ENCODE measurements at regions of chr20 and their contacts with region 1.

Region 1: DNA sequence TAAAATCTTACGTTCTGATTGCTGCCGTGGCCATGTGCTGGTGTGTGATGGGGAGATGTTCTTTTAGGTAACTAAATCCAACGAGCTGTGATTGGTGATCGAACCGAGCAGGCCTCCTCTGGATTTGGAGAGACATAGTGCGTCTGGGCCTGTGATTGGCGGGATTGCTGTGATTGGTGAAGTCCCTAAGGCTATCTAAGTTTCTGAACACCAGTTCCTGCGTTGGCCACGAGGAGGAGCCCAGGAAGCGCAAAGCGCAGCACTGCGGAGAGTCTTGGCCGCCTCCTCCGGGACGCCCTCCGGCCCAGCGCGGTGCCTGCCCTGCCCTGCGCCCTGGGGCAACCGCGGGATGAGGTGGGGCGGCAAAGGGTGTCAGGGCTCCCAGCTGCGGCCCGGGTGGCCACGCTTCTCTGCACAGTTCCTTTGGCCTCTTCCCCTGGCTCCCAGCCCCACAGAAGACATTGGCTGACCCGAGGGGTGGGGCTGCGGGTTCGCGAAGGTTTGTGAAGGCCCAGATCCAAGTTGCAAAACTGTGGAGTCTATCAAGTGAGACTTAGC is 33.0 kb downstream of the HNF4A start:
- DNase-seq: peak; percentile 89
- H3K4me3 ChIP-seq: no peak overlapping the region
- H3K27ac ChIP-seq: no peak overlapping the region
- H3K4me1 ChIP-seq: no peaks in the 10 kb centered on the region
- H3K27me3 ChIP-seq: no peaks in the 10 kb centered on the region
- CTCF ChIP-seq: peak; percentile 84

Region 2: DNA sequence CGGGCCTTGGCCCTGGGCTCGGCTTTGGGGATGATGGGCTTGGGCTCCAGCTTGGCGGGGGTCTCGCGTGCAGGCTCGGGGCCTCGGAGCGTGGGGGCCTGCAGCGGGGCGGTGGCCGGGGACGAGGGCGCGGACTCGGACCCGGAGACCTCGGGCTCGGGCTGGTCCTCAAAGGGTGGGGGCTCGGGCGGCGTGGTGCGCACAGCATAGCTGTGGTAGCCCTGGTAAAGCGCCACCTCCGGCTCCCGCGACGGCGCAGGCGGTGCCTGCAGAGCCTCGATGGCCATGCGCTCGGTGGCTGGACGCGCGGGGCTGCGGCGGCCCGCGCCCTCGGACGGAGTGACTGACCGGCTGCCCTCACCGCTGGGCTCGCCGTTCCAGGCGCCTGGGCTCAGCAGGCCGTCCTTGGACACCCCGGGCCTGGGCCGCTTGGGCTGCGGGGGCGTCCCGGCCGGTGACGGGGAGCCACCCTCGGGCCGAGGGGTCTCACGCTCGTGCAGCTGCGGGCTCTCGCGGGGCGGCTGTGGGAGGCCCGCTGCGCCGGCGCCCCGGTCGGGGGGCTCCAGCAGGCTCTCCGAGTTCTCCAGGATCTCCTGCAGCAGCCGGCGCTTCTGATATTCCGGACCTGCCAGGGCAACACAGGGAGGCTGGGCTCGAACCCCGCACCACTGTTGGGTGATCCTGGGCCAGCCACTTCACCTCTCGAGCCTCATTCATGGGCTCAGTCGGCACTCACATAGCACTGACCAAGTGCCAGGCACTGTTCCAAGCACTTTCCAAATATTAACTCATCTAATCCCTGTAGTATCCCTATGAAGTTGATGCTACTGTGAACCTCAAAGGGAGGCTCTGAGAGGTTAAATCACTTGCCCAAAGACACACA is 272.5 kb before region 1 on chr20:
- CTCF ChIA-PET with region 1: interaction called, 5 read pairs
- POLR2A ChIA-PET with region 1: no interaction called
- intact Hi-C with region 1: loop called (anchors 5 kb)
- DNase-seq: no peak
- H3K4me3 ChIP-seq: no peak overlapping the region
- H3K27ac ChIP-seq: no peak overlapping the region
- H3K4me1 ChIP-seq: no peaks in the 10 kb centered on the region
- H3K27me3 ChIP-seq: no peaks in the 10 kb centered on the region
- CTCF ChIP-seq: no peak

Region 3: GRCh38 chr20:44217342-44218092 is 171.0 kb before region 1 on chr20:
- CTCF ChIA-PET with region 1: interaction called, 6 read pairs
- POLR2A ChIA-PET with region 1: no interaction called
- intact Hi-C with region 1: loop called (anchors 1 kb)
- DNase-seq: peak; percentile 74
- H3K4me3 ChIP-seq: no peak overlapping the region
- H3K27ac ChIP-seq: no peak overlapping the region
- H3K4me1 ChIP-seq: no peaks in the 10 kb centered on the region
- H3K27me3 ChIP-seq: no peaks in the 10 kb centered on the region
- CTCF ChIP-seq: peak; percentile 86

Region 4: DNA sequence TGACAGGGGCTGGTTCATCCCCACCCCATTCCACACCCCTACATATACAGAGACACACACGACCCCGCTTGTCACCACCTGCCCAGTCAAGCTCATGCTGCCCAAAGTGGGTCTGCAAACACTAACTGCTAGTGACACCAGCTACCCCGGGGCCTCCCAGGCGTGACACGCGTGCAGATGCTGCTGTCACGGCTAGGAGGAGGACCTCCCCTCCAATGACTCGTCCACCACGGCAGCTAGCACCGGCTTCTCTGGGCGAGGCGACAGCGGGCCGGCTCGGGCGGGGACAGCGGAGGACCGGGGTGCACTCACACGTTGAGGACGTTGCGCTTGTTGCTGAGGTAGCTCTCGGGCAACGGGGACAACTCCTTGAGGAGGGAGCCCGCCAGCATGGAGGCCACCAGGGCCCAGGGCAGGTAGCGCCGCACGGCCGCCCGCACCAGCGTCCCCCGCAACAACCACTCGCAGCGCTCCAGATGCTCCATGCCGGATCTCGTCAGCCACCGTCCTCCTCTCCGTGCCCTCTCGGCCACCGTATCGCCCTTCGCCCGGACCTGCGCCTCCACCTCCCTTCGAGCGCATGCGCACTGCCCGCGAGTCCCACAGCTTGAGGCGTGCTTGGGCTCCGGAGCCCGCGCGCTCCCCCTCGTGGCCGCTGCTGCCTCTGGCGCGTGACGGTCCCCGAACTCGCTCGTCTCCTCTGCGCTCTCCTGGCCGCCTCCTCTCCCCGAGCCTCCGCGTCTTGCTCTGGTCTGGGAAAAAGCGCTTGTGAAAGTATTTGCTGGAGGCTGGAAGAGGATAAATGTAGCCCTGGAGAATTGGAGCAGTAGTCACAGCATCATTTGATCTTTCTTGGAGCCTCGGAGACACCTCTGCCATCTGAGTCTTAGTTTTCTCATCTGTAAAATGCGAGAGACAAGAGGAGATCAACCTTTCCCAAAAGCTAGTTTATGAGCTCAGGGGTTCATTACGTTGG is 77.6 kb before region 1 on chr20 and contains the start of gene FITM2:
- CTCF ChIA-PET with region 1: interaction called, 16 read pairs
- POLR2A ChIA-PET with region 1: no interaction called
- intact Hi-C with region 1: no loop called
- DNase-seq: peak; percentile 97
- H3K4me3 ChIP-seq: peak within 1 kb of the TSS; percentile 81
- H3K27ac ChIP-seq: peak within 1 kb of the TSS; percentile 51
- H3K4me1 ChIP-seq: peaks cover 4% of the 10 kb centered on the region
- H3K27me3 ChIP-seq: no peaks in the 10 kb centered on the region
- CTCF ChIP-seq: peak; percentile 99
- total RNA-seq, gene FITM2: 5.7 TPM in 2 replicates

Region 5: GRCh38 chr20:44460795-44461141 is 72.2 kb after region 1 on chr20:
- CTCF ChIA-PET with region 1: interaction called, 4 read pairs
- POLR2A ChIA-PET with region 1: no interaction called
- intact Hi-C with region 1: loop called (anchors 2 kb)
- DNase-seq: peak; percentile 45
- H3K4me3 ChIP-seq: no peak overlapping the region
- H3K27ac ChIP-seq: no peak overlapping the region
- H3K4me1 ChIP-seq: no peaks in the 10 kb centered on the region
- H3K27me3 ChIP-seq: no peaks in the 10 kb centered on the region
- CTCF ChIP-seq: peak; percentile 62

Region 6: DNA sequence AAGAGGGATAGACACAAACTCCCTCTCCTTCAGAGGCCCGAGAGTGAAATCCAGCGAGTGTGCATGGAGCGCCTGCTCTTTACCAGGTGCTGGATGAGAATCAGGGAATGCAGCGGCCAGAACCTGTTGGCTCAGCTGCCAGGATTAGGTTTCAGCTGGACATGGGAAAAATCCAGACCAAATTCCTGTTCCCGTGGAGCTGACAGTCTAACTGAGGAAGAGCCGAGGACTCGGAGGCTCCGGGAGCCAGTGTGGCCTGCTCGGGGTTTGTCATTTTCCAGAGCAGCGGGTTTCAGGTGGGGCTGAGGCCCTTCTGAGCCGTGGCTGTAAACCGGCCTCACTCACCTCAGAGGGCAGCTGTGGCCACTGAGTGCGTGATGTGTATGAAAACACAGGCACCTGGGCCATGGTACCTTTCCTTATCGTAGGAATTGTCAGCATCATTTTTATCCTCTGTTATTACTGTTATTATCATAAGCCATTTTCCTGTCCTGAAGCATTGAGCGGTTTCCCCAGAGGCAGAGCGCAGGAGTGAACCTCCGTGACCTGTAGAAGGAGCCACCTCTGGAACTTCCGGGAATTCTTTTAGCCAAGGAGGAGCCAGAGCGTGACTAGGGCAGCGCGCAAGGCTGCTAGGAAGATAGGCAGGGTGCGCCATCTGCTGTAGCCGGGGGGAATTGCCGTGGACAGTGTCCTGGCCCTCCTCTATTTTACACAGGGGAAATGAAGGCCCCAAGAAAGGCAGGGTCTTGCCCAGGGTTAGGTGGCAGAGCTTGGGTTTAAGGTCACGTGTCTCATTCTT is 221.2 kb after region 1 on chr20:
- CTCF ChIA-PET with region 1: interaction called, 7 read pairs
- POLR2A ChIA-PET with region 1: no interaction called
- intact Hi-C with region 1: loop called (anchors 1 kb)
- DNase-seq: peak; percentile 85
- H3K4me3 ChIP-seq: no peak overlapping the region
- H3K27ac ChIP-seq: no peak overlapping the region
- H3K4me1 ChIP-seq: peaks cover 5% of the 10 kb centered on the region
- H3K27me3 ChIP-seq: no peaks in the 10 kb centered on the region
- CTCF ChIP-seq: peak; percentile 98

Region 7: DNA sequence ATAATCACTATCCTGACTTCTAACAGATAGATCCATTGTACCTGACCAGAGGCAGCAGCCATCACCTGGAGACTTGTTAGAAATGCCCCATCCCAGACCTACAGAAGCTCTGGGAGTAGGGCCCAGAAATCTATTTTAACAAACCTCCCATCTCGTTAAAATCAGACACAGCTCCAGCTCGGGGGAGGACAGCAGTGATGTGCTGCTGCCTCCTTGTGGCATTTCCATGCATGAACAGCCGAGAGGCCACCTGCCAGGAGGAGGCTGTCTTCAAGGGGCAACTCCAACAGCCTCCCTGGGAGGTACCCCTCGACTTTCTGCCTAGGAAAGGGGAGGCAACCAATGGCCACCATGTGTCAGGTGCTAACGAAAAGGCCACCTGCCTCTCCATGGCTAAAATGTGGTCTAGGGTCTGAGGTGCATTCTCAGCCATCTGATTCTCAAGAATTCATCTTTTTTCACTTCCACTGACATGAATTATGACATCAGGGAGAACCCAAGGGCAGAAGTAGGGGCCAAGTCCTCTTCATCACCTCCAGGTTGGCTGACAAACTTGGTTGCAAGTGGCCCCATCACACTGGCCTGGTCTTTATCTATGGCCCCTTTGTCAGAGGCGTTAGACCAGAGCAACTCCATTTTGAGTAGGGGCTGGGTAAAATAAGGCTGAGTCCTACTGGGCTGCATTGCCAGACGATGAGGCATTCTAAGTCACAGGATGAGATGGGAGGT is 345.0 kb after region 1 on chr20:
- CTCF ChIA-PET with region 1: no interaction called
- POLR2A ChIA-PET with region 1: no interaction called
- intact Hi-C with region 1: loop called (anchors 5 kb)
- DNase-seq: peak; percentile 78
- H3K4me3 ChIP-seq: no peak overlapping the region
- H3K27ac ChIP-seq: no peak overlapping the region
- H3K4me1 ChIP-seq: peaks cover 22% of the 10 kb centered on the region
- H3K27me3 ChIP-seq: no peaks in the 10 kb centered on the region
- CTCF ChIP-seq: peak; percentile 90